PC-9 (cell line): ENCODE measurements at regions of chr5 and their contacts with region 1.

Region 1: GRCh38 chr5:14491015-14491915 is 90.3 kb upstream of the OTULINL start:
- DNase-seq: peak; percentile 60 to 92
- H3K4me3 ChIP-seq: no peak overlapping the region
- H3K27ac ChIP-seq: no peak overlapping the region
- H3K4me1 ChIP-seq: no peaks in the 10 kb centered on the region
- H3K27me3 ChIP-seq: no peaks in the 10 kb centered on the region
- CTCF ChIP-seq: no peak

Region 2: DNA sequence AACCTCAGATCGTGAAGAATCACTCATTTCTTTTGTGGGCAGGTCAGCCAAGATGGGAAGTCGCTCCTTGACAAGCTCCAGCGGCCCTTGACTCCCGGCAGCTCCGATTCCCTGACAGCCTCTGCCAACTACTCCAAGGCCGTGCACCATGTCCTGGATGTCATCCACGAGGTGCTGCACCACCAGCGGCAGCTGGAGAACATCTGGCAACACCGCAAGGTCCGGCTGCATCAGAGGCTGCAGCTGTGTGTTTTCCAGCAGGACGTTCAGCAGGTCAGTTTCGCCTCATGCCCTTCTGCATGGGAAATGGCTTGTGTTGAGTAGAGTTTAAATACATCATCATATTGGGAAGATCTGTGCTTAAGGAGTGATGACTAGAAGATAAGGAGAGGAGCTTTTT is 174.8 kb before region 1 on chr5:
- CTCF ChIA-PET with region 1: no interaction called
- POLR2A ChIA-PET with region 1: no interaction called
- intact Hi-C with region 1: no loop called
- DNase-seq: no peak
- H3K4me3 ChIP-seq: no peak overlapping the region
- H3K27ac ChIP-seq: no peak overlapping the region
- H3K4me1 ChIP-seq: no peaks in the 10 kb centered on the region
- H3K27me3 ChIP-seq: no peaks in the 10 kb centered on the region
- CTCF ChIP-seq: no peak

Region 3: GRCh38 chr5:14581333-14581890 is 90.1 kb after region 1 on chr5 and contains the start of gene OTULINL:
- CTCF ChIA-PET with region 1: no interaction called
- POLR2A ChIA-PET with region 1: no interaction called
- intact Hi-C with region 1: loop called (anchors 5 kb)
- DNase-seq: peak; percentile 48 to 93
- H3K4me3 ChIP-seq: peak within 1 kb of the TSS; percentile 75
- H3K27ac ChIP-seq: no peak within 1 kb of the TSS
- H3K4me1 ChIP-seq: 0 out of 2 replicates have a peak, but pooled peaks cover 6% of the 10 kb centered on the region
- H3K27me3 ChIP-seq: peaks cover 36% of the 10 kb centered on the region
- CTCF ChIP-seq: no peak
- total RNA-seq, gene OTULINL: 4.1 and 7.1 TPM in 2 replicates

Region 4: GRCh38 chr5:14656898-14657297 is 165.6 kb after region 1 on chr5:
- CTCF ChIA-PET with region 1: interaction called, 21 read pairs
- POLR2A ChIA-PET with region 1: no interaction called
- intact Hi-C with region 1: loop called (anchors 5 kb)
- DNase-seq: no peak
- H3K4me3 ChIP-seq: no peak overlapping the region
- H3K27ac ChIP-seq: no peak overlapping the region
- H3K4me1 ChIP-seq: no peaks in the 10 kb centered on the region
- H3K27me3 ChIP-seq: 0 out of 2 replicates have a peak, but pooled peaks cover 14% of the 10 kb centered on the region
- CTCF ChIP-seq: no peak

Region 5: DNA sequence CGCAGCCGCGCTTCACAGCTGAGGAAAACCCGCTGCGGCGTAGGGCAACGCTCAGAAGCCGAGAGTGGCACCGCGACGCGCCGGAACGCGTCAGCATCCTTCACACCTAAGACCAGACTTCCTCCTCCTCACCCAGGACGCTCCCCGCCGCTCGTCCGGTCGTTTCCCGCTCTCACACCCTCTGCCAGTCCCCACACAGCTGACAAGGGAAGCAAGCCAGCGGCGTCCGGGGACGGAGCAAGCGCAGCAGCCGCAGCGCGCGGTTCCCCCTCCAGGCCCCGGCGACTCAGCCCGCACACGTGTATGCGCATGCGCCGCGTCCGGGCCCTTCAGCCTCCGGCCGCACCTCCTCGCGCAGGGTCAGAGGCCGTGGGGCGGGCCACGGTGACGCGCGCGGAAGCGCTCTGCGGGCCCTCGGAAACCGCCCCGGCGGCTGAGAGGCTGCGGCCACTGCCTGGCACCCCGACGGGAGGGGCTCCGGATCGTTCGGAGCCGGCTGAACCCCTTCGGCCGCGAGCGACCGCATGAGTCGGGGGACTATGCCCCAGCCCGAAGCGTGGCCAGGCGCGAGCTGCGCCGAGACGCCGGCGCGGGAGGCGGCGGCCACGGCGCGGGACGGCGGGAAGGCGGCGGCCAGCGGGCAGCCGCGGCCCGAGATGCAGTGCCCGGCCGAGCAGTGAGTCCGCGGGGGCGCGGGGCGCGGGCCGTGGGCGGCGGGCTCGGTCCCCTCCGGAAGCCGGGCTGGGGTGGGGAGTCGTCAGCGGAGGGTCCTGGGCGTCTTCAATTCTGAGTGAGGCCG is 173.2 kb after region 1 on chr5 and contains the start of gene OTULIN:
- CTCF ChIA-PET with region 1: no interaction called
- POLR2A ChIA-PET with region 1: no interaction called
- intact Hi-C with region 1: loop called (anchors 5 kb)
- DNase-seq: peak; percentile 71 to 98
- H3K4me3 ChIP-seq: peak within 1 kb of the TSS; percentile 73
- H3K27ac ChIP-seq: peak within 1 kb of the TSS; percentile 21
- H3K4me1 ChIP-seq: peaks cover 28% of the 10 kb centered on the region
- H3K27me3 ChIP-seq: no peaks in the 10 kb centered on the region
- CTCF ChIP-seq: no peak
- total RNA-seq, gene OTULIN: 77.2 and 79.1 TPM in 2 replicates